ENCODE measurements at regions of chr1 and their contacts with region 1.

Region 1: DNA sequence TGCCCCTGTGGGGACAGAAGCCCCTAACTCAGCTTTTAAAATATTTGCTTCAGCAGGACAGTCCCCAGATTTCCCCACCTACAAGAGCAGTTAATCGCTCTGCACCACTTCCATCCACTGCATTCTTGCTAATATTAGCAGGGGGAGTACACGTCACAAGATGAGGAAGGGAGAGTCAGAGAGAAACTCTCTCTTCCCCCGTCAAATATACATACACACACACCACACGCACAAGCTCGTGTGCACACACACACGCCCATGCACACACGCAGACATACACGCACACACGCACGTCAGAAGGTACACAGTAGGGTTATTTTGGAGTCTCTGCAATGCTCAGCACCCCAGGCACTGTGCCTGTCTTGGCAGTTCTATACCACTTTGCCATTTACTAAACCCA is 2.1 kb downstream of the CLCA1 start:
- DNase-seq: no peak
- H3K4me3 ChIP-seq: no peak overlapping the region
- CTCF ChIP-seq: no peak

Region 2: GRCh38 chr1:86380257-86380861 is 90.5 kb before region 1 on chr1:
- CTCF ChIA-PET with region 1: interaction called, 23 read pairs
- POLR2A ChIA-PET with region 1: no interaction called
- DNase-seq: peak; percentile 45
- H3K4me3 ChIP-seq: no peak overlapping the region
- CTCF ChIP-seq: peak; percentile 52

Region 3: DNA sequence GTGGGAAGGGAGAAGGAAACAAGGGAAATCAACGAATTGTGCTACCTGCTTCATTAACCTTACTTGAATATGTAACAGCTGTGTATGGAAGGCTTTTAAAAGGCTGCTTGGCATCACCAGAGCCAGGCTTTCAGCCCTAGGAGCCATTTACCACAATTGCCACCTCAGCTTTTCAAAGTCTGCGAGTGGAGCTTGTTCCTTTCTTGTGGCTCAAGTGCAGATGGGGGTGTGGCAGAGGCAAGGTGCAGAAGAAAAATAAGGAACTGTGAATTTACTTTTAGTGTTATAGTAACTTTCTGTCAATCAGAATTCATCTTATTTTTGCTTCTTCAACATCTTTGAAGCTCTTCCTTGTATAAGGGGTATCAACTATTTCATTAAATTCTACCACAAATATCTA is 29.3 kb before region 1 on chr1:
- CTCF ChIA-PET with region 1: interaction called, 14 read pairs
- POLR2A ChIA-PET with region 1: no interaction called
- DNase-seq: no peak
- H3K4me3 ChIP-seq: no peak overlapping the region
- CTCF ChIP-seq: no peak

Region 4: GRCh38 chr1:86487131-86487810 is 16.4 kb after region 1 on chr1:
- CTCF ChIA-PET with region 1: interaction called, 57 read pairs
- POLR2A ChIA-PET with region 1: no interaction called
- DNase-seq: peak; percentile 69
- H3K4me3 ChIP-seq: no peak overlapping the region
- CTCF ChIP-seq: no peak

Region 5: DNA sequence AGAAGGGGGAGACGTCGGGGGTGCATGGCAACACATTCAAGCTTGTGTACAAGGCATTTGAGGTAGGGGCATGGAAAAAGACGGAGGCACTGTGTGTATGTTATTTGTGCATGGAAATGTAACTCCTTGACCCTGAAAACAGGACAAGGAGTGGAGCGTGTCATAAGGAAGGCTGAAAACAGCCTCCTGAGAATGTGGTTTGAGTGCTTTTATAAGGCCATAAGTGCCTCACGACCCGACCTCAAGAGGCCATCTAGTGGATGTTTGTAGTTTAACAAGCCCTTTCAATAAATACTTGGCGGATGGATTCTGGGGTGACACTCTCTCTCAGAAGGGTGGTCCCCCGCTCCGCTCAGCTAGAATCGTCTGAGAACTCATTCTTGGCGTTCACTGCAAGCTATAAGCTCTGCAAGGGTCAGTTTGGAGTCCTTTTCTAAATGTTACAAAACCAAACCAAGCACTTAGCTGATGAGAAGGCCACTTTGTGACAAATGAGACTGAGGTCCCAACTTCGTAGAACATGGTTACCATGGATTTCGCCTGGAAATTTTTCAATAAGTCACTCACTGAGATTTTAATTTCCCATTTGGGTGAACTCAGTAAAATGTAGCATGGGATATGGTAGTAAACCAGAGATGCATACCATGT is 37.2 kb after region 1 on chr1:
- CTCF ChIA-PET with region 1: interaction called, 43 read pairs
- POLR2A ChIA-PET with region 1: no interaction called
- DNase-seq: no peak
- H3K4me3 ChIP-seq: no peak overlapping the region
- CTCF ChIP-seq: peak; percentile 33

Measured in AG04449 (cell line).